MCF 10A (cell line): ENCODE measurements at regions of chr13 and their contacts with region 1.

Region 1: GRCh38 chr13:38349390-38350113 is at the start of gene UFM1:
- DNase-seq: peak; percentile 95
- H3K4me3 Mint-ChIP-seq: peak within 1 kb of the TSS; percentile 94
- H3K27ac Mint-ChIP-seq: peak within 1 kb of the TSS; percentile 99
- H3K4me1 Mint-ChIP-seq: peaks cover 35% of the 10 kb centered on the region
- H3K27me3 Mint-ChIP-seq: no peaks in the 10 kb centered on the region
- CTCF ChIP-seq: no peak
- total RNA-seq, gene UFM1: 129 and 173 TPM in 2 replicates

Region 2: DNA sequence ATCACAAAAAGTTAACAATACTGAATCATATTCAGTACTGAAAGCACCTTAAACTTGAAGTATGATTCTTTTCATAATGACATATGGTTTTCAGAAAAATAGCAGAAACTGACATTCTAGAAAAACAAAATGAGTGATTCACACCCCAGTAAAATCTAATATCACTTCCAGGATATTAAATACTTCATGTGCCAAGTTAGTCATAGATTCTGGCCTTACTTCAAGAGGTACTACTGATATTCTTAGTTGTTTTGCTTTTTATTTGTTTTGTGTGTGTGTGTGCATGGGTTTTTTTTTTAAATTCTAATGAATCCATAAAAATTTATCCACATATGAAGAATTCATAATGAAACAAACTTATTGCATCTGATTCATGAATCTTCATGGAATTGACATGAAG is 207.8 kb before region 1 on chr13:
- CTCF ChIA-PET with region 1: no interaction called
- POLR2A ChIA-PET with region 1: interaction called, 10 read pairs
- intact Hi-C with region 1: no loop called
- DNase-seq: peak; percentile 64
- H3K4me3 Mint-ChIP-seq: no peak overlapping the region
- H3K27ac Mint-ChIP-seq: peak overlapping the region; percentile 74
- H3K4me1 Mint-ChIP-seq: peaks cover 13% of the 10 kb centered on the region
- H3K27me3 Mint-ChIP-seq: no peaks in the 10 kb centered on the region
- CTCF ChIP-seq: no peak

Region 3: DNA sequence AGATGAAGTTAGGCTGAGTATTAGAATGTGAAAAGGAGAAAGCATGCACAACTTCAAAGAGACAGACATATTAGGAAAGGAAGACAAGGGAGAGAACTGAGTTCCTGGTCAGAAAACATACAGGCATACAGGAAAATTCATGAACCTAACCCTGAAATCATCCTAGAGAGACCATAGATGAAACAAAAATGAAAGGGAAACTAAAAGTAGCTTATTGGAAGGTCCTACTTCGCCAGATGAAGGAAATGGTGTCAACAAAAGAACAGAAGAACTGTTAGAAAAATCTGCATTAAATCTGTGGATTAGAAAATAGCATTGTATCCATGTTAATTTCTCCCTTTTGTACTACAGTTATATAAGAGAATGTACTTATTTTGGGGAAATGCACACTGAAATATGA is 168.9 kb before region 1 on chr13:
- CTCF ChIA-PET with region 1: no interaction called
- POLR2A ChIA-PET with region 1: interaction called, 24 read pairs
- intact Hi-C with region 1: no loop called
- DNase-seq: no peak
- H3K4me3 Mint-ChIP-seq: peak overlapping the region; percentile 10
- H3K27ac Mint-ChIP-seq: peak overlapping the region; percentile 70
- H3K4me1 Mint-ChIP-seq: peaks cover 29% of the 10 kb centered on the region
- H3K27me3 Mint-ChIP-seq: no peaks in the 10 kb centered on the region
- CTCF ChIP-seq: no peak

Region 4: GRCh38 chr13:38202740-38203139 is 146.8 kb before region 1 on chr13:
- CTCF ChIA-PET with region 1: no interaction called
- POLR2A ChIA-PET with region 1: interaction called, 3 read pairs
- intact Hi-C with region 1: loop called (anchors 10 kb)
- DNase-seq: peak; percentile 75
- H3K4me3 Mint-ChIP-seq: no peak overlapping the region
- H3K27ac Mint-ChIP-seq: peak overlapping the region; percentile 70
- H3K4me1 Mint-ChIP-seq: peaks cover 20% of the 10 kb centered on the region
- H3K27me3 Mint-ChIP-seq: no peaks in the 10 kb centered on the region
- CTCF ChIP-seq: no peak

Region 5: DNA sequence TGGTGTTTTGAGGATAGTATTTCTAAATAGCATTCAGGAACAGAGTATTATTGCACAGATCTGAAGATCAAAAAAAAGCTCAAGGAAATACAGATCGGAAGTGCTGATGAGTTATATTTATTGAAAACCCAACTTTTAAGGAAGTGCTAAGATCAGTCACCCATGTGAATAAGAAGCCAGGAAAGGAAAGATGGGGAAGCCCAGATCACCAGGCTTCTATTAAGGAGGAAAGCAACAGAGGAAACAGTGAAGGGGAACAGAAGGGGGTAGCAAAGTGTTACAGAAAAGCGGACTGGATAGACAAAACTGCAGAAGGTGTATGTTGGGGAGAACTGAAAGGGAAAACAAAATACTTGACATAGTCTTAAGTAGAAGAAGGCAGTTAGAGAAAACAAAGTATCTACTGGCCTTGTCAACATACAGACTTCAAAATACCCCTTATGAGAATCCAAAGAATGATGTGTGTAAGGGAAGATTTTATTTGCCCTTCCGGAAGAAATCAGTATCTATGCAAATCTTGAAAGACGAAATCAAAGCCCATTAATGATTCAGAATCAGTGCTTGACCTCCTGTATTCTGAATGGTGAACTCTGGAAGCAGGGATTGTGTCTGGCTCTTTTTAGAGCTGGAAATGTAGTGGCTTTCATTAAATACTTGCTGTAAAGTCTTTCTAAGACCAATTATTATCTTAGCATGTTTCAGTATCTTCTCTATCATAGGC is 12.2 kb after region 1 on chr13:
- CTCF ChIA-PET with region 1: no interaction called
- POLR2A ChIA-PET with region 1: interaction called, 26 read pairs
- intact Hi-C with region 1: no loop called
- DNase-seq: no peak
- H3K4me3 Mint-ChIP-seq: no peak overlapping the region
- H3K27ac Mint-ChIP-seq: no peak overlapping the region
- H3K4me1 Mint-ChIP-seq: no peaks in the 10 kb centered on the region
- H3K27me3 Mint-ChIP-seq: no peaks in the 10 kb centered on the region
- CTCF ChIP-seq: no peak

Region 6: GRCh38 chr13:38417727-38418126 is 68.2 kb after region 1 on chr13:
- CTCF ChIA-PET with region 1: interaction called, 3 read pairs
- POLR2A ChIA-PET with region 1: interaction called, 4 read pairs
- intact Hi-C with region 1: loop called (anchors 5 kb)
- DNase-seq: peak; percentile 53
- H3K4me3 Mint-ChIP-seq: no peak overlapping the region
- H3K27ac Mint-ChIP-seq: no peak overlapping the region
- H3K4me1 Mint-ChIP-seq: no peaks in the 10 kb centered on the region
- H3K27me3 Mint-ChIP-seq: no peaks in the 10 kb centered on the region
- CTCF ChIP-seq: peak; percentile 32

Region 7: GRCh38 chr13:38530492-38530891 is 180.9 kb after region 1 on chr13:
- CTCF ChIA-PET with region 1: interaction called, 4 read pairs
- POLR2A ChIA-PET with region 1: interaction called, 4 read pairs
- intact Hi-C with region 1: loop called (anchors 10 kb)
- DNase-seq: peak; percentile 33
- H3K4me3 Mint-ChIP-seq: no peak overlapping the region
- H3K27ac Mint-ChIP-seq: no peak overlapping the region
- H3K4me1 Mint-ChIP-seq: no peaks in the 10 kb centered on the region
- H3K27me3 Mint-ChIP-seq: peaks cover 29% of the 10 kb centered on the region
- CTCF ChIP-seq: peak; percentile 42

Region 8: DNA sequence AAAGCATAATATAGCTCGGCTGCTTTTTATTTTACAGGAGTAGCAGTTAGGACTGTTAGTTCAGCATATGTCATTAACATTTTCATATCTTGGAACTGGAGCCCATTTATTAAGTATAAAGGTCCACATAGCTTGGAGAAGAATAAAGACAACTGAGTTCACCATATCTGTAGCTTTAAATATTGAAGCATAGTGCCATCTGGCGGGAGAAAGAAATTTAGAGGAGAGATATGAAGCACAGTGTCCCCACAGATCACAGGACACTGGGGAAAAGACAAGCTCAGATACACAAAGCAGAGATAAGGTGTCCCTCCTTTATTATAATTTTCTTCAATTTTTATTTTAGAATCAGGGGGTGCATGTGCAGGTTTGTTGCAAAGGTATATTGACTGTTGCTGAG is 232.6 kb after region 1 on chr13:
- CTCF ChIA-PET with region 1: no interaction called
- POLR2A ChIA-PET with region 1: no interaction called
- intact Hi-C with region 1: no loop called
- DNase-seq: peak; percentile 61
- H3K4me3 Mint-ChIP-seq: no peak overlapping the region
- H3K27ac Mint-ChIP-seq: no peak overlapping the region
- H3K4me1 Mint-ChIP-seq: no peaks in the 10 kb centered on the region
- H3K27me3 Mint-ChIP-seq: peaks cover 17% of the 10 kb centered on the region
- CTCF ChIP-seq: peak; percentile 32